HEK293 (cell line): ENCODE measurements at regions of chr16 and their contacts with region 1.

Region 1: GRCh38 chr16:23539984-23540816 is 16.9 kb downstream of the EARS2 start:
- H3K4me3 ChIP-seq: no peak overlapping the region
- H3K27ac ChIP-seq: no peak overlapping the region
- H3K4me1 ChIP-seq: no peaks in the 10 kb centered on the region
- CTCF ChIP-seq: no peak

Region 2: DNA sequence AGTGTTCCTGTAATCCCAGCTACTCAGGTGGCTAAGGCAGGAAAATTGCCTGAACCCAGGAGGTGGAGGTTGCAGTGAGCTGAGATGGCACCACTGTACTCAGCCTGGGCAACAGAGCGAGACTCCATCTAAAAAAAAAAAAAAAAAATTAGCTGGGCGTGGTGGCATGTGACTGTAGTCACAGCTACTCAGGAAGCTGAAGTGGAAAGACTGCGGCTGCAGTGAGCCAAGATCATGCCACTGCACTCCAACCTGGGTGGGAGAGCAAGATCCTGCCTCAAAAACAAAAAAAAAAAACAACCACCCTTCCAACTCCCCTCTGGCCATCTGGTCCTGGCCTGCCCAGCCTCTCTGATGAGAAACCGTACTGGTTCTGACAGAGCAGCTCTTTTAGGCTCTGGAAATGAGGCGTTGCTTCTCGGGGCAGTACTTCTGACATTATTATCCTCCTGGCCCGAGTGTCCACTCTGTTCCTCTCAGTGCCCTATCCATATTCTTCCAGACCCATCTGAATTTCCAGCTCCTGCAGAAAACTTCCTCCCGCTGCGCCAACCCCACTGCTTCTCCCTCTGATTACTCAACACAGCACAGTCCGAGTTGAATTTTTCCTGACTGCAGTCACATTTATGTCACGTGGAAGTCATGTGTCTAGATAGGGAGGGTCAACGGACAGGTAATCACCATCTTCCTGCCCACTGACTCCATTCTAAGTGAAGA is 43.2 kb before region 1 on chr16:
- CTCF ChIA-PET with region 1: no interaction called
- POLR2A ChIA-PET with region 1: no interaction called
- H3K4me3 ChIP-seq: no peak overlapping the region
- H3K27ac ChIP-seq: no peak overlapping the region
- H3K4me1 ChIP-seq: no peaks in the 10 kb centered on the region; the same call in 1 of the 2 replicates
- CTCF ChIP-seq: no peak

Region 3: GRCh38 chr16:23556881-23557778 is 16.9 kb after region 1 on chr16 and contains the starts of genes EARS2 and UBFD1:
- CTCF ChIA-PET with region 1: interaction called, 11 read pairs
- POLR2A ChIA-PET with region 1: interaction called, 8 read pairs
- H3K4me3 ChIP-seq: peak within 1 kb of the TSS; percentile 87
- H3K27ac ChIP-seq: peak within 1 kb of the TSS; percentile 60; the same call in 1 of the 2 replicates
- H3K4me1 ChIP-seq: no peaks in the 10 kb centered on the region
- CTCF ChIP-seq: peak; percentile 100

Region 4: GRCh38 chr16:23650674-23651416 is 110.6 kb after region 1 on chr16:
- CTCF ChIA-PET with region 1: no interaction called
- POLR2A ChIA-PET with region 1: no interaction called
- H3K4me3 ChIP-seq: no peak overlapping the region
- H3K27ac ChIP-seq: no peak overlapping the region
- H3K4me1 ChIP-seq: no peaks in the 10 kb centered on the region
- CTCF ChIP-seq: no peak